Activated B cell treated with CpG ODN at 0.5 μM for 24 hours (primary cell): ENCODE measurements at regions of chr15 and their contacts with region 1.

Region 1: GRCh38 chr15:100572362-100572983 is 29.5 kb downstream of the LINS1 start:
- DNase-seq: no peak
- ATAC-seq: peak; percentile 31
- H3K4me3 Mint-ChIP-seq: no peak overlapping the region
- H3K27ac Mint-ChIP-seq: no peak overlapping the region
- H3K4me1 Mint-ChIP-seq: peaks cover 3% of the 10 kb centered on the region
- H3K27me3 Mint-ChIP-seq: no peaks in the 10 kb centered on the region
- CTCF ChIP-seq: no peak

Region 2: GRCh38 chr15:100349696-100350433 is 222.6 kb before region 1 on chr15:
- CTCF ChIA-PET with region 1: interaction called, 80 read pairs
- POLR2A ChIA-PET with region 1: no interaction called
- intact Hi-C with region 1: loop called (anchors 1 kb)
- DNase-seq: peak; percentile 69
- ATAC-seq: peak; percentile 92
- H3K4me3 Mint-ChIP-seq: peak overlapping the region; percentile 90
- H3K27ac Mint-ChIP-seq: peak overlapping the region; percentile 46
- H3K4me1 Mint-ChIP-seq: peaks cover 10% of the 10 kb centered on the region
- H3K27me3 Mint-ChIP-seq: peaks cover 10% of the 10 kb centered on the region
- CTCF ChIP-seq: peak; percentile 19